RWPE1 (cell line): ENCODE measurements at regions of chr15 and their contacts with region 1.

Region 1: DNA sequence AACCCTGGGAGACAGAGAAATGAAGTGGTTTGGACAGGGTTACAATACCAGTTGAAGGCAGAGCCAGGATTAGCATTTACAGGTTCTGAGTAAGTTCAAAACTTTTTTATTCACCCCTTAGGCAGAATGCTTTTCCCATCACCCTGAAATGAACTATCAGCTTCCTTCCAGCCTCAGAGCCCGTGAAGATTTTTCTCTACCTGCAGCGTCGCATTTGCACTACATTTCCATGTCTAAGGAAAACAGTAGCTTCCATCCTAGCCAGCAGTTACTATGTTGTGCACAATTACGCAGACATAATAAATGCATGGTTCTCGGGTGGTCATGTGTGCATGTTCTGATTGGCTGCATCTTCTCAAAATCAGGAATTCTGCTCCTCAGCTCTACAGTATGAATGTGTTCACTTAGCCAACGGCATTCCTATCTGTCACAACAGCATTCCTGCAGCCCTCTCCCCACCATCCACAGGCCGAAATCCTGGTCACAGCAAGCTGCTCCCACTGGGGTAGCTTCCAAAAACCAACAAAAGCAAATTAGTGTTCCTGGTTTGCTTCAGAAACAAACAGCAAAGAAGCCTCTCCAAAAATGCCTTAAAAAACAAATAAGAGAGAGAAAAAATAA is 510.8 kb upstream of the SEMA6D start:
- DNase-seq: no peak
- H3K27ac ChIP-seq: no peak overlapping the region
- CTCF ChIP-seq: no peak

Region 2: GRCh38 chr15:47402829-47403228 is 196.4 kb after region 1 on chr15:
- CTCF ChIA-PET with region 1: no interaction called
- POLR2A ChIA-PET with region 1: interaction called, 11 read pairs
- DNase-seq: no peak
- H3K27ac ChIP-seq: no peak overlapping the region
- CTCF ChIP-seq: no peak